Naive thymus-derived CD4-positive, alpha-beta T cell (primary cell): ENCODE measurements at regions of chr5 and their contacts with region 1.

Region 1: GRCh38 chr5:134070725-134071613 is 43.5 kb upstream of the TCF7 start:
- DNase-seq: peak in 5 of 9 donors; percentile 27 to 61 (median 41)
- ATAC-seq: peak; percentile 50
- H3K4me3 ChIP-seq: peak overlapping the region; percentile 62
- H3K4me3 Mint-ChIP-seq: peak overlapping the region; percentile 74 to 95 (median 87)
- H3K27ac ChIP-seq: peak overlapping the region; percentile 72
- H3K27ac Mint-ChIP-seq: peak overlapping the region; percentile 79 to 99 (median 95)
- H3K4me1 ChIP-seq: peaks cover 18 to 75% of the 10 kb centered on the region in 2 donors
- H3K4me1 Mint-ChIP-seq: peaks cover 44 to 95% (median 78%) of the 10 kb centered on the region in 7 donors
- H3K27me3 ChIP-seq: no peaks in the 10 kb centered on the region
- H3K27me3 Mint-ChIP-seq: peaks cover 0 to 23% (median 0%) of the 10 kb centered on the region in 5 donors

Region 2: GRCh38 chr5:134053840-134054338 is 17.1 kb before region 1 on chr5:
- CTCF ChIA-PET with region 1: interaction called, 5 read pairs
- POLR2A ChIA-PET with region 1: interaction called, 15 read pairs
- intact Hi-C with region 1: no loop called
- DNase-seq: peak in 5 of 9 donors; percentile 25 to 42 (median 36)
- ATAC-seq: peak; percentile 78
- H3K4me3 ChIP-seq: no peak overlapping the region
- H3K4me3 Mint-ChIP-seq: peak overlapping the region; percentile 52 to 88 (median 74)
- H3K27ac ChIP-seq: peak overlapping the region; percentile 58
- H3K27ac Mint-ChIP-seq: peak overlapping the region; percentile 72 to 97 (median 90)
- H3K4me1 ChIP-seq: peaks cover 7 to 50% of the 10 kb centered on the region in 2 donors
- H3K4me1 Mint-ChIP-seq: peaks cover 24 to 61% (median 46%) of the 10 kb centered on the region in 7 donors
- H3K27me3 ChIP-seq: no peaks in the 10 kb centered on the region
- H3K27me3 Mint-ChIP-seq: no peaks in the 10 kb centered on the region

Region 3: GRCh38 chr5:134092878-134093277 is 21.9 kb after region 1 on chr5:
- CTCF ChIA-PET with region 1: interaction called, 40 read pairs
- POLR2A ChIA-PET with region 1: interaction called, 44 read pairs
- intact Hi-C with region 1: no loop called
- DNase-seq: no peak
- ATAC-seq: no peak
- H3K4me3 ChIP-seq: no peak overlapping the region
- H3K4me3 Mint-ChIP-seq: peak overlapping the region in 9 of 10 donors; percentile 36 to 87 (median 72)
- H3K27ac ChIP-seq: peak overlapping the region; percentile 69
- H3K27ac Mint-ChIP-seq: peak overlapping the region in 8 of 9 donors; percentile 91 to 99 (median 96)
- H3K4me1 ChIP-seq: peaks cover 59 to 93% of the 10 kb centered on the region in 2 donors
- H3K4me1 Mint-ChIP-seq: peaks cover 54 to 97% (median 85%) of the 10 kb centered on the region in 7 donors
- H3K27me3 ChIP-seq: no peaks in the 10 kb centered on the region
- H3K27me3 Mint-ChIP-seq: peaks cover 0 to 36% (median 0%) of the 10 kb centered on the region in 5 donors

Region 4: GRCh38 chr5:134132372-134133034 is 61.5 kb after region 1 on chr5:
- CTCF ChIA-PET with region 1: interaction called, 6 read pairs
- POLR2A ChIA-PET with region 1: interaction called, 22 read pairs
- intact Hi-C with region 1: no loop called
- DNase-seq: peak; percentile 52 to 94 (median 87)
- ATAC-seq: peak; percentile 87
- H3K4me3 ChIP-seq: peak overlapping the region; percentile 86
- H3K4me3 Mint-ChIP-seq: peak overlapping the region; percentile 93 to 100 (median 98)
- H3K27ac ChIP-seq: peak overlapping the region; percentile 97
- H3K27ac Mint-ChIP-seq: peak overlapping the region; percentile 90 to 99 (median 98)
- H3K4me1 ChIP-seq: peaks cover 92 to 97% of the 10 kb centered on the region in 2 donors
- H3K4me1 Mint-ChIP-seq: peaks cover 57 to 100% (median 90%) of the 10 kb centered on the region in 7 donors
- H3K27me3 ChIP-seq: no peaks in the 10 kb centered on the region
- H3K27me3 Mint-ChIP-seq: peaks cover 0 to 2% (median 0%) of the 10 kb centered on the region in 5 donors

Region 5: DNA sequence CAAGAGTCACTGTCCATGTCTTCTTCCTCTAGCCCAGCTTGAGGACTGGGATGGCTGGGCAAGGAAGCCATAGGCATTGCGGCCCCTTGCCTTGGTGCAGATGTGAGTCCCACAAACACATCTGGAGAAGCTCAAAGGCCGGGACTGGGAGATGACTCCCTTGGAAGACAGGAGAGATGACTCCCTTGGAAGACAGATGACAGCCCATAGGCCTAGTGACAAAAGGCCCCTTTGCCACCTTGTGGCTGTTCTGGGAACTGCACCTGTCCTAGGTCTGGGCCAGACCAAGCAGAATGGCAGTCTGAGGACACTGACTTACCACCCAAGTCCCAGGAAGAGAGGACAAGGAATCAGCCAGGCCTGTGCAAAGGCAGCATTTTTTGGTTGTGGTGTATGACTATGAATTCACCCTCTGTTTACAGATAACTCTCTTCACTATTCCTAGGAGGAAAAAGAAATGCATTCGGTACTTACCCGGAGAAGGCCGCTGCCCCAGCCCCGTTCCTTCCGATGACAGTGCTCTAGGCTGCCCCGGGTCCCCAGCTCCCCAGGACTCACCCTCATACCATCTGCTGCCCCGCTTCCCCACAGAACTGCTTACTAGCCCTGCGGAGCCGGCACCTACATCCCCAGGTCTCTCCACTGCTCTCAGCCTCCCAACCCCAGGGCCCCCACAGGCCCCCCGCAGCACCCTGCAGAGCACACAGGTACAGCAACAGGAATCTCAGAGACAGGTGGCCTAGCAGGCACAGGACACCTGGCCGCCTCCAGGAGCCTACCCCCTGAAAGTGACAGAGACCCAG is 75.0 kb after region 1 on chr5:
- CTCF ChIA-PET with region 1: interaction called, 6 read pairs
- POLR2A ChIA-PET with region 1: interaction called, 21 read pairs
- intact Hi-C with region 1: loop called in 1 of 2 experiments (anchors 1 kb)
- DNase-seq: peak; percentile 64 to 87 (median 77)
- ATAC-seq: peak; percentile 84
- H3K4me3 ChIP-seq: no peak overlapping the region
- H3K4me3 Mint-ChIP-seq: peak overlapping the region in 4 of 10 donors; percentile 18 to 54 (median 27)
- H3K27ac ChIP-seq: peak overlapping the region; percentile 63
- H3K27ac Mint-ChIP-seq: peak overlapping the region in 8 of 9 donors; percentile 75 to 93 (median 90)
- H3K4me1 ChIP-seq: peaks cover 5 to 29% of the 10 kb centered on the region in 2 donors
- H3K4me1 Mint-ChIP-seq: peaks cover 21 to 67% (median 46%) of the 10 kb centered on the region in 7 donors
- H3K27me3 ChIP-seq: no peaks in the 10 kb centered on the region
- H3K27me3 Mint-ChIP-seq: no peaks in the 10 kb centered on the region

Region 6: GRCh38 chr5:134411546-134412266 is 340.7 kb after region 1 on chr5 and contains the start of gene CDKN2AIPNL:
- CTCF ChIA-PET with region 1: no interaction called
- POLR2A ChIA-PET with region 1: no interaction called
- intact Hi-C with region 1: no loop called
- DNase-seq: peak; percentile 83 to 93 (median 89)
- ATAC-seq: peak; percentile 100
- H3K4me3 ChIP-seq: peak within 1 kb of the TSS; percentile 82
- H3K4me3 Mint-ChIP-seq: peak within 1 kb of the TSS; percentile 86 to 96 (median 92)
- H3K27ac ChIP-seq: peak within 1 kb of the TSS; percentile 82
- H3K27ac Mint-ChIP-seq: peak within 1 kb of the TSS; percentile 63 to 93 (median 90)
- H3K4me1 ChIP-seq: peaks cover 16 to 23% of the 10 kb centered on the region in 2 donors
- H3K4me1 Mint-ChIP-seq: peaks cover 20 to 54% (median 38%) of the 10 kb centered on the region in 7 donors
- H3K27me3 ChIP-seq: no peaks in the 10 kb centered on the region
- H3K27me3 Mint-ChIP-seq: no peaks in the 10 kb centered on the region
- total RNA-seq, gene CDKN2AIPNL: 11.5 to 20.8 (median 16.8) TPM